ENCODE measurements at regions of chr3 and their contacts with region 1.

Region 1: GRCh38 chr3:45760878-45761711 is 35.2 kb downstream of the SLC6A20 start:
- DNase-seq: peak; percentile 50 to 73 (median 65)
- H3K4me3 ChIP-seq: no peak overlapping the region
- H3K27ac ChIP-seq: no peak overlapping the region
- H3K4me1 ChIP-seq: no peaks in the 10 kb centered on the region
- H3K27me3 ChIP-seq: no peaks in the 10 kb centered on the region
- CTCF ChIP-seq: peak; percentile 55 to 81 (median 66)
- POLR2A ChIP-seq: no peak

Region 2: DNA sequence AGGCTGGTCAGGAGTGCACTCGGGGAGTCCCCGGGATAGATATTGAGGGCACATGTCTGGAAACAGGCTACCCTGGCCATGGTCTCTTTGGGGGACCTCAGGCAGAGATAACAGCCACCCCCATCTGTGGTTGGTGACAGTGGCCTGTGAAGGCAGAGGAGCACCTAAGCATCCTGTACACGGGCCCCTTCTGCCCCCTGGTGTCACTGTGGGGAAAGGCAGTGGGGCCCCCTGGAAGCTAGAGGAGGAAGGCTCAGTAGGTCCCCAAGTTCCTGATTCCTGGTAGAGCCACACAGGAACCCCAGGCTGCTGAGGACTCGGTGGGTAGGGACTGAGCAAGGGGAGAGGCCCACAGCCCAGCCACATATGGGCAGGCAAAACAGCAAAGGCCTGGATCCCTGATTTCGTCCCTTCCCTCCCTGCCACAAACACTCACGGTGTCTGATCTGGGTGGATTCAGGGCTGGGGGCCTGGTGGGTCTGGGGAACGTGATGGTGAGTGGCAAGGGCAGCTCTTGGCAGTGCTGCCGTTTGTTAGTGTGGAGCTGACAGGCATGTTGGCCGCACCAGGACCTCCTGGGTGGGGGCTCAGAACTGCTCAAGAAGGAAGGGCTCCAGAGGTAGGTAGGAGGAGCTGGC is 168.1 kb after region 1 on chr3:
- intact Hi-C with region 1: loop called (anchors 5 to 10 kb)
- DNase-seq: peak in 2 of 7 donors; percentile 23 to 32
- H3K4me3 ChIP-seq: no peak overlapping the region
- H3K27ac ChIP-seq: no peak overlapping the region
- H3K4me1 ChIP-seq: no peaks in the 10 kb centered on the region
- H3K27me3 ChIP-seq: no peaks in the 10 kb centered on the region
- CTCF ChIP-seq: peak; percentile 24 to 60 (median 48)
- POLR2A ChIP-seq: no peak

Region 3: DNA sequence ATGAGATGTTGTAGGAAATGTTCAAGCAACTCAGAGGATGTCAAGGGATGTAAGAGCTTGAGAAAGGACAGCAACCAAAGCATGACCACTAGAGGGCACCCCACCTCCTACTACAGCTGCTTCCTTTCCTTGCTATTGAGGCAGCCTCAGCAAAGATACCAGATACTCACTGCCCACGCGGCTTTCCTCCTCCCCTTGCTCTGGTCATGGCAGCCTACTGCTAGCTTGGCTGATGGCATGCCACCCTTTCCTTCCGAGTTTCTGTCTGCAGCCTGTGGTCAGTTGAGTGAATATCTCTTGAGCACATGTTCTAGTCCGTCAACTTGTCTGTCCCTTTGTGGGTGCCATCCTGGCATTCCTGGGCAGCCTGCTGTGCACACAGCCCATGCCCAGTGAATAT is 177.8 kb after region 1 on chr3:
- intact Hi-C with region 1: loop called in 1 of 2 experiments (anchors 10 kb)
- DNase-seq: peak; percentile 83 to 96 (median 91)
- H3K4me3 ChIP-seq: no peak overlapping the region
- H3K27ac ChIP-seq: no peak overlapping the region
- H3K4me1 ChIP-seq: no peaks in the 10 kb centered on the region
- H3K27me3 ChIP-seq: no peaks in the 10 kb centered on the region
- CTCF ChIP-seq: peak; percentile 88 to 96 (median 90)
- POLR2A ChIP-seq: no peak

Region 4: DNA sequence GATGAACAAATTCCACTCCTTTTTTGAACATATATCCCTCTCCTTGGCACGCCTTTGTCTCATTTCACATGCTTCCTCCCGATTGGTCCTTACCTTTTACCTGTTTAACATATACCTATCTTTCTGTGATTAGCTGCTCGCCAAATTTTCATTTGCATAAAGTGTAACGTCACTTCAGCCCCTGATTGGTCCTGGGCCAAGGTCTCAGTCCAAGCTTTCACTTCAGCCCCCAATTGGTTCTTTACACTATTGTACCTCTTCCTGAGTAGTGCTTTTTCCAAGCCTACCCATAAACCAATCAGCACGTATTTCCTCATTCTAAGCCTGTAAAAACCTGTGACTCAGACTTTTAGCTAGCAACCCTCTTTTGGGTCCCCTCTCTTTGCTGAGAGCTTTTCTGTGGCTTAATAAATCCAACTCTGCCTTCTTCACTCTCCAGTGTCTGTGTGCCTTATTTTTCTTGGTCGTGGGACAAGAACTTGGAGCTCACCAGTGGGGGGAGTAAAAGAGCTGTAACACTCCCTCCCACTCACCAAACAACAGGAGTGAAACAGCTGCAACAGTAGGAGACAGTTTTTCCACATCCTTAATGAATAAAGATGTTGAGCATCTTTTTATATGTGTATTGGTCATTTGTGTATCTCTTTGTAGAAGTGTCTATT is 266.8 kb after region 1 on chr3:
- intact Hi-C with region 1: no loop called
- DNase-seq: no peak
- H3K4me3 ChIP-seq: no peak overlapping the region
- H3K27ac ChIP-seq: no peak overlapping the region
- H3K4me1 ChIP-seq: no peaks in the 10 kb centered on the region
- H3K27me3 ChIP-seq: no peaks in the 10 kb centered on the region
- CTCF ChIP-seq: no peak
- POLR2A ChIP-seq: no peak

Region 5: GRCh38 chr3:46078712-46079400 is 317.8 kb after region 1 on chr3:
- intact Hi-C with region 1: loop called (anchors 5 to 10 kb)
- DNase-seq: peak; percentile 86 to 98 (median 94)
- H3K4me3 ChIP-seq: no peak overlapping the region
- H3K27ac ChIP-seq: no peak overlapping the region
- H3K4me1 ChIP-seq: no peaks in the 10 kb centered on the region
- H3K27me3 ChIP-seq: no peaks in the 10 kb centered on the region
- CTCF ChIP-seq: peak; percentile 87 to 100 (median 98)
- POLR2A ChIP-seq: no peak

Region 6: GRCh38 chr3:46089237-46090011 is 328.3 kb after region 1 on chr3:
- intact Hi-C with region 1: loop called in 1 of 2 experiments (anchors 10 kb)
- DNase-seq: peak; percentile 38 to 87 (median 72)
- H3K4me3 ChIP-seq: no peak overlapping the region
- H3K27ac ChIP-seq: peak overlapping the region in 2 of 5 donors; percentile 67 to 93
- H3K4me1 ChIP-seq: peaks cover 0 to 4% of the 10 kb centered on the region in 2 donors
- H3K27me3 ChIP-seq: no peaks in the 10 kb centered on the region
- CTCF ChIP-seq: no peak
- POLR2A ChIP-seq: no peak